Common myeloid progenitor, CD34-positive (primary cell): ENCODE measurements at regions of chr5 and their contacts with region 1.

Region 1: DNA sequence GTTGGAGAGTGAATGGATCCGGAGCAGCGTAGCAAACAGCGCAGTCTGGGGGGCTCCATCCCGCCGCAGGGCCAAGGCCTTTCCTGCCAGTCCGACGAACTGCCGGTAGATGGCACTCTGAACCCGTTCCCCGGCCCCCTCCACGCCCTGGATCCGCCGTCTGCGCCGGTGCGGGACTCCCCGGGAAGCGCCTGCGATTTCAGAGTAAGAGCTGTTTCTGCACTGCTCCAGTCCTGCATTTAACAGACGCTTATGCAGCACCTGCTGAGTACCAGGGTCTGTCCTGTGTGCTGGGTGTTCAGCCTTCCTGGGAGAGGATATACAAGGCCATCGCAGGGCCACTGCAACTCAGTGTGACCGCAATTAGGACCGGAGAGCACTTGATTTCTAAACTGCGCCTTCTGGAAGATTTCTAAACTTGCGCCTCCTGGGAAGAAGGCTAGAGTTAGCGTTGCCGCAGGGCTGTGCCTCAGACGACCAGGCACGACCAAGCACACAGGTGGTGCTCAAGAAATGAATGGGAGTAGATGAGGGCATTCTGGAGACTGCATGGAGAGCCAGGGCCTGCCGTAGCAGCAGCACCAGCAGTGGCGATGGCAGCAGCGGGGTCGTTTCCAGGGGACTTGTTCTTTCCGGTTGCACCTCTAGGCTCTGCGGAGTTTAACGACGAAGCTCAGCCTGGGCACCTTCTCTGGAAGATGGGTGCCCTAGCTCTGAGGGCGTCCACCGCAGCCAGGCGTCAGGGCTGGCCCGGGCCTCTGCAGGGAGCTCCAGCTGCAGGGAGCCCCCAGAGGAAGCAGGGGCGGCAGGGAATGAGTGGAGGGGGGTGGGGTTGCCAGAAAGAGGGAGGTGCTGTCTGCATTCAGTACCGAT is 14.3 kb upstream of the TIFAB start:
- DNase-seq: peak; percentile 70 to 85 (median 82)
- H3K4me3 ChIP-seq: peak overlapping the region in 5 of 7 experiments; percentile 23 to 71 (median 58)
- H3K27ac ChIP-seq: no peak overlapping the region
- H3K4me1 ChIP-seq: peaks cover 0 to 21% (median 15%) of the 10 kb centered on the region in 4 experiments
- H3K27me3 ChIP-seq: peaks cover 2 to 47% (median 20%) of the 10 kb centered on the region in 5 experiments

Region 2: GRCh38 chr5:135053278-135053677 is 413.1 kb before region 1 on chr5:
- CTCF ChIA-PET with region 1: no interaction called
- POLR2A ChIA-PET with region 1: no interaction called
- DNase-seq: peak; percentile 54 to 84 (median 79)
- H3K4me3 ChIP-seq: no peak overlapping the region
- H3K27ac ChIP-seq: no peak overlapping the region
- H3K4me1 ChIP-seq: peaks cover 2 to 13% (median 10%) of the 10 kb centered on the region in 4 experiments
- H3K27me3 ChIP-seq: peaks cover 10 to 97% (median 41%) of the 10 kb centered on the region in 5 experiments

Region 3: DNA sequence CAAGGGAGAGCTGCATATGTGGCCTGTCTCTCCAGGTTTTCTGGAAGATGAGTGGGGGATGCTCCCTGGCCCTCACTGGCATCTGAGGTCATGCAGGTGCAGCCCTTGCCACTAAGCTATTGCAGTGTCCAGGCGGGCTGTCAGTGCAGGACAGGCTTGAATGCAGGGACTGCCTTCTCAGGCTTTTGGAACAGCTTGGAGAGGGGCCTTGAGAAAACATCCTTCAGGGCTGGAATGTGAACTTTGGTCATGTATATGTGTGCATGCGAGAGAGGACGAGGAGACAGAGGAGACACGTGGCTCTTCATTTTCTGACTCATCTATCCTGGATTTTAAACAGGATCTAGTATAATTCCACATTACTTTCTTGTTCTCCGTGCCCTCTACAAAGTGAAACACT is 157.7 kb before region 1 on chr5:
- CTCF ChIA-PET with region 1: no interaction called
- POLR2A ChIA-PET with region 1: no interaction called
- DNase-seq: no peak
- H3K4me3 ChIP-seq: no peak overlapping the region
- H3K27ac ChIP-seq: no peak overlapping the region
- H3K4me1 ChIP-seq: peaks cover 0 to 30% (median 13%) of the 10 kb centered on the region in 4 experiments
- H3K27me3 ChIP-seq: no peaks in the 10 kb centered on the region

Region 4: DNA sequence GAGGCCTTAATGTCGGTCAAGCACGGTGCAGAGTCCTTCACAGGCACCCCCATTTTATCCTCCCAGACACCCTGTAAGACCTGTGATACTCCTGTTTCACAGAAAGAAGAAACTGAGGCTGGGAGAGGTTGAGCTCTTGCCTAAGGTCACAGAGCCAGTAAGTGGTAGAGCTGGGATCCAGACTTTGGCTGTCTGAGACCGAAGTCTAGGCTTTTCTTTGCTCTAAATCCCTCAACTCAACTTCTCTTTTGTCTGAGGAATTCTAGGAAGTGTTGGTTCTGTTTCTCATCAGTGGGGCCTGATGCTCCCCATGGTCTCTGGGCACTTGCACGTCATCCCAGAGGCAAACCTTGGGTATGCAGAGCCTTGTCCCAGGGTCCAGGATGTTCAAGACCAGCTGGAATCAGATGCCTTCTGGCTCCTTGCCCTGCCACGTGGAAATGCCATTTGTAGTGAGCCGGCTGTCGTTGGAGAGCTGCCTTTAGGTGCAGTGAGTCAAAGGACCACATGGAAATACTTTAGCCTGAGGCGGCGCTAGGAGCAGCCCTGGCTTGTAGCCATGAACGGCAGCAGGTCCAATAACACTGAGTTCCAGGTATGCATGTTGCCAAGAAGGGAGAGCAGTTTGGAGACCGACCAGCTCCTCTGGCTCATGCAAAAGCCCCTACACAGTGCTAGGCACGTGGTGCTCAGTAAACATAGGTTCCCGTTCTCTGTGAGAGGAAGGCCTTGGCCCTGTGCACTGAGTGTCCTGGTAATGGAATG is 28.4 kb before region 1 on chr5:
- CTCF ChIA-PET with region 1: interaction called, 307 read pairs
- POLR2A ChIA-PET with region 1: no interaction called
- DNase-seq: no peak
- H3K4me3 ChIP-seq: peak overlapping the region in 1 of 7 experiments; percentile 43
- H3K27ac ChIP-seq: no peak overlapping the region
- H3K4me1 ChIP-seq: peaks cover 8 to 98% (median 75%) of the 10 kb centered on the region in 4 experiments
- H3K27me3 ChIP-seq: no peaks in the 10 kb centered on the region

Region 5: DNA sequence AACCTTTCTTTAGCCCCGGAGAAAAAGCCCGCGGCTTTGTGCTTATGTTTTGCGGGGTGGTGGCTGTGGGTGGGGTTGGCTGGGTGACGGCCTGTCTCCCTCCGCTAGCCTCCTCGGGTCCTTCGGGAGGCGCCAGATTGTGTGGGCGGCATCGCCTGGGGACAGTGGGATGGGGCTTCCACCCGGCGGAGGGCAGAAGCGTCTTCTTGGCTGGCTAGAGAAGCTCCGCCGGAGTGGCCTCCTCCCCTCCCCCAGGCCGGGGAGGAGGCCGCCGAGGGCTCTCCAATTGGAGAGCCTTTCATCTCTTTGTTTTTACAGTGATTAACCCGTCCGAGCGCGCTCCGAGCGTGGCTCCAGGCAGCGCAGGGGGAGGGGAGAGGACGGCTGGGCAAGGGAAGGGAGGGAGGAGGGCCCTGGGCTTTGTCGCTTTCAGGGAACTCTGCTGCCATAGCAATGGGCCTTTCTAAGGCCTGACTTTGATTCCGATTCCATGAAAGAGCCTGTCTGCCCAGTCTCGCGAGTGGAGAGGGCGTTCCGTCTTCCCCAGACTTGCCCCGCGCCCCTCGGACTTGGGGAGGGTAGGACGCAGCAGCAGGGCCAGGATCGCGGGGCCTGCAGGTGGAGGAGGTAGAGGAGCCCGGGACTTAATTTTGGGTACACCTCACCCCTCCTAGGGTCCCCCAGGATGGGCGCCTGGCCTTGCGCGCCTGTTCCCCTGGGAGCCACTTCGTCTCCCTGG is 22.5 kb after region 1 on chr5:
- CTCF ChIA-PET with region 1: interaction called, 17 read pairs
- POLR2A ChIA-PET with region 1: no interaction called
- DNase-seq: no peak
- H3K4me3 ChIP-seq: peak overlapping the region in 3 of 7 experiments; percentile 15 to 52 (median 38)
- H3K27ac ChIP-seq: no peak overlapping the region
- H3K4me1 ChIP-seq: peaks cover 0 to 38% (median 28%) of the 10 kb centered on the region in 4 experiments
- H3K27me3 ChIP-seq: peaks cover 0 to 92% (median 45%) of the 10 kb centered on the region in 5 experiments

Region 6: DNA sequence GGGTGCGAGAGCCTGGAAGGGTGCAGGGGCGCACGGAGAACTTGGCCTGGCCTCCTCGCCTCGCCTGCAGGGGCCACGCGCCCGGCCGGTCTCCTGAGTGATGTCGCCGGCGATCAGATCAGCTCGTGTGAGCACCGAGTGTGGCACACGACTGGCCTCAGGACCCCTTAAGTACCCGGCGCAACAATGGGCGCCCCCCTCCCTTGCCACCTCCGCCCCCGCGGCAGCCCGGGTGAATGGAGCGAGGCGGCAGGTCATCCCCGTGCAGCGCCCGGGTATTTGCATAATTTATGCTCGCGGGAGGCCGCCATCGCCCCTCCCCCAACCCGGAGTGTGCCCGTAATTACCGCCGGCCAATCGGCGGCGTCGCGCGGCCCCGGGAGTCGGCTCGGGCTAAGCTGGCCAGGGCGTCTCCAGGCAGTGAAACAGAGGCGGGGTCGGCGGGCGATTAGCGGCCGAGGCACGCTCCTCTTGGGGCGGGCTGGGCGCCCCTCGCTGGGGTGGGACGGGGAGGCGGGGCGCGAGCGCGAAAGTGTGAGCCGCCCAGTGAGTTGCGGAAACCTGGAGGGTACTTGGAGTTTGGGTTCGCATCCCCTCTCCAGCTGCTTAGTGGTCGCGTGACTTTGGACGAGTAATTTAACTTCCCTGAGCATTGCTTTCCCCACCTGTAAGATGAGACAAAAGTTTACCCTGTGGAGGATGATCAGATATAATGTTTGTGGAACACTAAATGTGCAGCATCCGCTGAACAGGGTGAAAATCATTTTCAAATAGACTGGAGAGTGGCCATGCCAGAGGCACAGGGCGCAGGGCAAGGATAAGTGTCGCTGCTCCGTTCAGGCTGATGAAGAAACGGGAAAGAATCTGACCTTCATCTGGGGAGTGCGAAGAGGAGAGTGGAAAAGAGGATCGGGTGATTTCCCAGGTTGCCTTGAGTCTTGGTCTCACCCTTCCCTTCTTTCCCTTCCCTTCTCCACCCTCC is 69.7 kb after region 1 on chr5 and contains the start of gene NEUROG1:
- CTCF ChIA-PET with region 1: interaction called, 12 read pairs
- POLR2A ChIA-PET with region 1: no interaction called
- DNase-seq: peak in 1 of 3 donors; percentile 30
- H3K4me3 ChIP-seq: peak within 1 kb of the TSS in 4 of 7 experiments; percentile 17 to 53 (median 29)
- H3K27ac ChIP-seq: no peak within 1 kb of the TSS
- H3K4me1 ChIP-seq: peaks cover 0 to 17% (median 12%) of the 10 kb centered on the region in 4 experiments
- H3K27me3 ChIP-seq: peaks cover 16 to 100% (median 67%) of the 10 kb centered on the region in 5 experiments

Region 7: DNA sequence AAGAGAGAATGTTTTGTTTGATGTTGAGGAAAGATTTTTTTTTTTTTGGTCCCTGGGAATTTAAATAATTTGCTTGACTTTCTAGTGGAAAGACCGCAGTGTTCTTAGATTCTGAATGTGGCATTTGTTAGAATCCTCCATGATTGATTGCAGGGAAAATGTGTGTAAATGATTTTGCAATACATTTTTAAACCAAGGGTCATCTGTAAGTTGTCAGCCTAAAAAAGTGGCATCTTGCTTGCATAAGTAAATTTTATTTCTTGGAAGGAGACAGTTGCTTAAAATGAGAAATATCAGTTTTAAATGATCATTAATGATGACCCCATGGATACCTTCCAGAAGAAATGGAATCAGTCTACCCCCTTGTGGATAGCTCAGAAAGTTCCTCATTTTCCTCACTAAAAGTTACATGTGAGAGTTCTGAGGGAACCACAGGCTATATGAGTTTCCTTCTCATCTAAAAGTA is 262.9 kb after region 1 on chr5:
- CTCF ChIA-PET with region 1: interaction called, 11 read pairs
- POLR2A ChIA-PET with region 1: no interaction called
- DNase-seq: peak; percentile 13 to 38 (median 35)
- H3K4me3 ChIP-seq: no peak overlapping the region
- H3K27ac ChIP-seq: no peak overlapping the region
- H3K4me1 ChIP-seq: no peaks in the 10 kb centered on the region
- H3K27me3 ChIP-seq: peaks cover 0 to 1% (median 0%) of the 10 kb centered on the region in 5 experiments